Gastrocnemius medialis (tissue), 4 donors: ENCODE measurements at regions of chr12 and their contacts with region 1.

Region 1: GRCh38 chr12:112066566-112066965 is 42.0 kb downstream of the NAA25 start:
- DNase-seq: no peak
- ATAC-seq: no peak
- H3K4me3 ChIP-seq: no peak overlapping the region
- H3K27ac ChIP-seq: no peak overlapping the region
- H3K4me1 ChIP-seq: no peaks in the 10 kb centered on the region
- H3K27me3 ChIP-seq: no peaks in the 10 kb centered on the region
- CTCF ChIP-seq: no peak
- POLR2A ChIP-seq: no peak

Region 2: GRCh38 chr12:112226768-112227167 is 160.2 kb after region 1 on chr12:
- in situ Hi-C with region 1: loop called in 2 of 4 experiments (anchors 10 to 25 kb)
- intact Hi-C with region 1: no loop called
- DNase-seq: no peak
- ATAC-seq: no peak
- H3K4me3 ChIP-seq: no peak overlapping the region
- H3K27ac ChIP-seq: no peak overlapping the region
- H3K4me1 ChIP-seq: no peaks in the 10 kb centered on the region
- H3K27me3 ChIP-seq: no peaks in the 10 kb centered on the region
- CTCF ChIP-seq: no peak
- POLR2A ChIP-seq: no peak